ENCODE measurements at regions of chr19 and their contacts with region 1.

Region 1: GRCh38 chr19:13150187-13150930 is at the starts of genes IER2 and STX10:
- DNase-seq: peak; percentile 84 to 95 (median 91)
- ATAC-seq: peak; percentile 54 to 60
- H3K4me3 Mint-ChIP-seq: peak within 1 kb of the TSS; percentile 93 to 99 (median 98)
- H3K27ac Mint-ChIP-seq: peak within 1 kb of the TSS; percentile 92 to 100 (median 98)
- H3K4me1 Mint-ChIP-seq: peaks cover 23 to 44% (median 27%) of the 10 kb centered on the region in 4 donors
- H3K27me3 Mint-ChIP-seq: peaks cover 0 to 3% (median 0%) of the 10 kb centered on the region in 5 donors
- polyA plus RNA-seq, gene IER2: 100 to 162 (median 107) TPM
- polyA plus RNA-seq, gene STX10: 36.1 to 56.2 (median 50.2) TPM

Region 2: GRCh38 chr19:12789904-12790619 is 360.3 kb before region 1 on chr19:
- POLR2A ChIA-PET with region 1: interaction called, 11 read pairs
- DNase-seq: peak; percentile 82 to 96 (median 90)
- ATAC-seq: peak; percentile 35 to 38
- H3K4me3 Mint-ChIP-seq: peak overlapping the region; percentile 91 to 99 (median 96)
- H3K27ac Mint-ChIP-seq: peak overlapping the region; percentile 97 to 100 (median 100)
- H3K4me1 Mint-ChIP-seq: peaks cover 22 to 50% (median 39%) of the 10 kb centered on the region in 4 donors
- H3K27me3 Mint-ChIP-seq: peaks cover 0 to 4% (median 0%) of the 10 kb centered on the region in 5 donors

Region 3: DNA sequence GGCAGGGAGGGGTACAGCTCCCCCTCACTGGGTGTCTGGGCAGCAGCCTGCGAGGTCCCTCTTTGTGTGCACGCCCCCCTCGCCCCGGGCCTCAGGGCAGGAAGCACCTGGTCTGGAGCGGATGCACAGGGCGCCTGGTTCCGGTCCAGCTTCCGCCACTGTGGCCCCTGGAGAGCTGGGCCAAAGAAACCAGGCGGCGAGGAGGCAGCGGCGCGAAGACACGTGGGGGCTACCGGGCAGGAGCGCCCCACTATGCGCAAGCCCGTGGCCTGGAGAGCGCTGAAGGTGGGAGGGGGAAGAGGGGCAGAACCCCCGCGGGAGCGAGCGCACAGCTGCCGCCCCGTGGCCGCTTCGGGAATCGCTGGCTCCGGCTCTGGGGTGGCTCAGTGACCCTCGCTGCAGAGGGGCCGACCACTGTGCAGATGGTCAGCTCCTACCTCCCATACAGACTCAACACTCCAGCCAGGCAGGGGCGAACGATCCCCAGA is 46.0 kb before region 1 on chr19:
- POLR2A ChIA-PET with region 1: interaction called, 30 read pairs
- DNase-seq: peak; percentile 42 to 79 (median 64)
- ATAC-seq: peak; percentile 42 to 60
- H3K4me3 Mint-ChIP-seq: peak overlapping the region; percentile 88 to 96 (median 91)
- H3K27ac Mint-ChIP-seq: peak overlapping the region; percentile 79 to 96 (median 92)
- H3K4me1 Mint-ChIP-seq: peaks cover 14 to 56% (median 47%) of the 10 kb centered on the region in 4 donors
- H3K27me3 Mint-ChIP-seq: no peaks in the 10 kb centered on the region

Region 4: GRCh38 chr19:13162518-13163314 is 12.4 kb after region 1 on chr19:
- POLR2A ChIA-PET with region 1: interaction called, 918 read pairs
- DNase-seq: peak; percentile 60 to 87 (median 72)
- ATAC-seq: peak; percentile 50 to 56
- H3K4me3 Mint-ChIP-seq: peak overlapping the region; percentile 78 to 93 (median 88)
- H3K27ac Mint-ChIP-seq: peak overlapping the region; percentile 76 to 99 (median 98)
- H3K4me1 Mint-ChIP-seq: peaks cover 23 to 91% (median 73%) of the 10 kb centered on the region in 4 donors
- H3K27me3 Mint-ChIP-seq: no peaks in the 10 kb centered on the region

Region 5: DNA sequence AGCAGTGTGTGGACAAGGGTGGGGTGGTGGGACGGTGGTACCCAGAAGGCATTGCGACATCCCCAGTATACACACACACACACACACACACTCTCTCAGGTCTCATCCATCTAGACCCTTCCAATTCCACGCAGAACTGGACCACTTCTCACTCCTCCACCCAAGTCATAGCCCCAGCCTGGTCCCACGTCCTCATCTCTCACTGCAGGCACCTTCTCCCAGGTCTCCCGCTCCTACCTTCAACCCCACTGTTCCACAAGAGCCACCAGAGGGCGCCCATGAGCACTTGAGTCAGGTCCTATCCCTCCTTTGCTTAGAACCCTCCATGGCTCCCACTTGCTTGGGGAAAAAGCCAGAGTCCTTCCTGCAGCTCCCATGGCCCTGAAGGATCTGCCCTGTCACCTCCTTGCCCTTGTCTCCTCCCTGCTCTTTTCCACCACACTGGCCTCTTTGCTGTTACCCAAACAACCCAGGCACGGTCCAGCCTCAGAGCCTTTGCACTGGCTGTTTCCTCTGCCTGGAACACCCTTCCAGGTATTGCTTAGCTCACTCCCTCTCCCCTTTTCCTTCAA is 62.5 kb after region 1 on chr19:
- POLR2A ChIA-PET with region 1: interaction called, 11 read pairs
- DNase-seq: peak; percentile 49 to 88 (median 63)
- ATAC-seq: peak; percentile 58 to 78
- H3K4me3 Mint-ChIP-seq: peak overlapping the region in 2 of 10 donors; percentile 17 to 31
- H3K27ac Mint-ChIP-seq: peak overlapping the region in 5 of 10 donors; percentile 27 to 75 (median 58)
- H3K4me1 Mint-ChIP-seq: peaks cover 26 to 42% (median 35%) of the 10 kb centered on the region in 4 donors
- H3K27me3 Mint-ChIP-seq: no peaks in the 10 kb centered on the region

Measured in naive thymus-derived CD8-positive, alpha-beta T cell (primary cell).